AG04449 (cell line): ENCODE measurements at regions of chr22 and their contacts with region 1.

Region 1: DNA sequence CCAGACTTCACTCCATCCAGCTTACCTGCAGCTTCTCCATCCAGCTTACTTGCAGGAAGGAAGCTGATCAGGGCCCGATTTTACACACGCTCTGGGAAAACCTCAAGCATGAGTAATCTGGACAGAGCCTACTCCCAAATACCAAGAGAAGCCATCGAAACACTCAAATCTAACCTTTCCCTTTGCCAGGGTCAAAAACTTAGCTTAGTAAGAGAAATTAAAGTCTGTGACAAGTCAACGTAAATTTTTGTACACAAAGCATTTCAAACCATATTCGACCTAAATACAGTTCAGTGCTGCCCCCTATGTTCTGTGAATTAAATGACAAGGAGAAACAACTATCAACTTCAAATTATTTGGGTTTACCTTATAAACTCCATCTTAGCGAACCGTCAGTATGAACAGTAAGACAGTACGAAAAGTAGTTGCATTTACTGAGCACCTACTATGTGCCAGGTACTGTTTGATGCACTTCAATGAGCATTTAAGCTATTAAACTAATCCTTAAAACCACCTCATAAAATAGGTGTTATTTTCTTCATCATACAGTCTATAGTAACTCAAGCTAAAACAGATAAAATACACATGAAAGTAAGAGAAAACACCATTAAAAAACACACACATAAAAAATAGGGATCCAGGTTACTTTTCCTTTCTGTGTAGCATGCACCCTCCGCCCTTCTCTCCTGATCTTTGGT is 36.9 kb downstream of the ARFGAP3 start:
- DNase-seq: peak; percentile 59
- H3K4me3 ChIP-seq: no peak overlapping the region
- CTCF ChIP-seq: peak; percentile 40

Region 2: GRCh38 chr22:42635531-42635930 is 184.7 kb before region 1 on chr22:
- CTCF ChIA-PET with region 1: interaction called, 12 read pairs
- POLR2A ChIA-PET with region 1: no interaction called
- DNase-seq: peak; percentile 76
- H3K4me3 ChIP-seq: no peak overlapping the region
- CTCF ChIP-seq: no peak

Region 3: GRCh38 chr22:42662114-42663021 is 157.8 kb before region 1 on chr22:
- CTCF ChIA-PET with region 1: interaction called, 62 read pairs
- POLR2A ChIA-PET with region 1: no interaction called
- DNase-seq: no peak
- H3K4me3 ChIP-seq: peak overlapping the region; percentile 68
- CTCF ChIP-seq: peak; percentile 77

Region 4: DNA sequence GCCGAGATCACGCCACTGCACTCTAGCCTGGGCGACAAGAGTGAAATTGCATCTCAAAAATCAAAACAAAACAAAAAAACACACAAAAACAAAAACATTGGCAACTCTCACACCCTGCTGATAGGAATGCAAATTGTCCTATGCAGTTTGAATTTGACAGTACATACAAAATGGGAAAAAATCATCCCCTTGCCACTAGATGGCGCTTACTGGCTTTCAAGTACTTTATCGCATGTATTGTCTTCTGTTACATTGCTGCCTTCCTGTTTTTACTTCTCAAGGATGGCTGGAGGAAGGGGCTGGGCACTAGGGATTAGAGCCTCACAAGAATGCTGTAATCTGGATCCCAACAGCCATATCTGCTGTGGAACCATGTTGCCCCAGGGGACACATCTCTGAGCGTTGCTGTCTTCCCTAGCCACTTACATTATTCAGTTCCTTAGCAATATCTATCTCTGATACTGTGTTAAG is 40.1 kb before region 1 on chr22:
- CTCF ChIA-PET with region 1: interaction called, 12 read pairs
- POLR2A ChIA-PET with region 1: no interaction called
- DNase-seq: peak; percentile 86
- H3K4me3 ChIP-seq: no peak overlapping the region
- CTCF ChIP-seq: peak; percentile 78

Region 5: DNA sequence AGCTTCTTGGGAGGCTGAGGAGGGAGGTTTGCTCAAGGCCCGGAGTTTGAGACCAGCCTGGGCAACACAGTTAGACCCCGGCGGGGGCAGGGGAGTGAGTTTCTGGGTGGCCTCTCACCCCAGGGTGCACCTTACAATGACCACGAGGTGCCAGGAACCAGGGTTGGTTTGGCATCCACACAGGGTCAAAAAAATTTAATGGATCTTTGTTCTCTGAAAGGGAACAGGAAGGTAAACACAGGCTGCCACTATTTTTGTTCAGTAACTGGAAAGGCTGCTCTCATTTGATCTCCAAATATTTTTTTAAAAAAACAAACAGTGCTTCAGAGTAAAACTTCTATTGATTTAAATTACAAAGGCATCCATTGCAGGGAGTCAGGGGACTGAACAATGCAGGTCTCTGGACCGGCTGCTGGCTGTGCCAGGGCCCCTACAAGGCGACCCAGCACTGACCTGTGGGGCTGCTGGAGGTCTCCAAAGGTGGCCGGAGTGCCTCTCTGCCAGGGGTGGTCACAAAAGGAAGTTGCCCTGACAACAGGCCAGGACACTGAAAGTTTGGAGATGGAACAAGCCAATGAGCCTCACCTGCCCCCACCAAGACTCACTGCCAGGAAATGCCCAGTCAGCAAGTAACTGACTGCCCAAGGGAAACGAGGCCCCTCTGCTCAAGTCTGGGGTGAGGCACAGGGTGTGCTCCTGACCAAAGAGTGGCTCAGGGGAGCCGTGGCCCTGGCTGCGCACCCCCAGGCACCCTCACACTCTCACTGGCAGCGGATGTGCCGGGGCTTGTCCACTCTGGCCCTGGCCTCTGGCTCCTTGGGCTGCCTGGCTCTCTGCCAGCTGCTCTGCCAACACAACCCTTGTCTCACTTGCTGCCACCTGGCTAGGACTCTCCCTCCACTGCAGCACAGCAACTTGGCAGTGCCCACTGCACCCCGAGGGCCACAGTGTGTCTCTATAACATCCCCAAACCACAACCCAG is 14.9 kb before region 1 on chr22:
- CTCF ChIA-PET with region 1: interaction called, 32 read pairs
- POLR2A ChIA-PET with region 1: interaction called, 3 read pairs
- DNase-seq: no peak
- H3K4me3 ChIP-seq: no peak overlapping the region
- CTCF ChIP-seq: no peak